ENCODE measurements at regions of chr11 and their contacts with region 1.

Region 1: GRCh38 chr11:1202776-1203504 is 19.9 kb upstream of the MUC5B start:
- DNase-seq: peak; percentile 53 to 83 (median 67)
- H3K4me3 ChIP-seq: no peak overlapping the region
- H3K27ac ChIP-seq: no peak overlapping the region
- H3K4me1 ChIP-seq: no peaks in the 10 kb centered on the region
- H3K27me3 ChIP-seq: peaks cover 4% of the 10 kb centered on the region
- CTCF ChIP-seq: peak; percentile 93

Region 2: GRCh38 chr11:789943-790342 is 413.0 kb before region 1 on chr11 and contains the start of gene CEND1:
- intact Hi-C with region 1: no loop called
- DNase-seq: peak in 2 of 5 donors; percentile 42 to 73
- H3K4me3 ChIP-seq: no peak within 1 kb of the TSS
- H3K27ac ChIP-seq: no peak within 1 kb of the TSS
- H3K4me1 ChIP-seq: peaks cover 0 to 5% (median 0%) of the 10 kb centered on the region in 3 donors
- H3K27me3 ChIP-seq: no peaks in the 10 kb centered on the region
- CTCF ChIP-seq: no peak
- total RNA-seq, gene CEND1: 0.16 TPM

Region 3: DNA sequence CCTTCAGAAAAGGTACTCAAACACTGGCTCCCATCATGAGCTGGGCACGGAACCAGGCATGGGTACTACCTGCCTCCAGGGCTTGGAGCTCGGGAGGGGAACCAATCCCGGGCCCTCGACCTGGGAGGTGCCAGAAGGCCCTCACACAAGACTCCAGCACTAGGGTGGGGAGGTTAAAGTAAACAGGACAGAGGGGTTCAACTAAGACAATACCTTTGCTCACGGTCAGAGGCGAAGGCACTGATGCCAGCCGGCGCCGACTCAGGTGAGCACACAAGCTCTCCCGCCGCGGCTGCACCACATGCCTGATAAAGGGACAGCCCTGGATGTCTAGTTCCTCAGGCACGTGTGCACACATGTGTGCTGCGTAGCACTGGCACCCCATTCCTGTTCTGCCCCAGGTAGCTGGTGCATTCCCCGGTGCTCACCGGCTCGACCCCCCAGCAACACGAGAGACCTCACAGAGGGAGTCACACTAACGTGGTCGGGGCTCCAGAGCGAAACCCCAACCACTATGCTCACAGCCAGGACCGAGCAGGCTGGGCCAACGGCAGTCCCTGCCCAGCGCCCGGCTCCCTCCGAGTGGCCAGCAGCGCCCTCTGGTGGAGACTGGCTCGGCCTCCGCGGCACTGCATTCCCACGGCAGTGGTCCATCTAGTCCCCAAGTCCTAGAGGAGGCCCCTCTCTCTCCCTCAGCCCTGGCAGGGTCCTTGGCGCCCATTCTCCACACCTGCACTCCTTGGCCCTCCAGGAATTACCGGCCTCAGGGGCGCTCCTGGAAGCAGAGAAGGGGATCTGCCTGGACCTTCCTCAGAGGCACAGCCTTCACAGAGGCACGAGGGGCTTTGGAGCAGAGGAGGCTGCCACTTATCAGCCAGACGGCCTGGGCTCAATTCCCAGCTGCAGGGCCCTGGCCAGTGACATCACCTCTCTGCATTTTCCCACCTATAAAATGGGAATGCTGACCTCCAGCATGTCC is 312.4 kb after region 1 on chr11:
- intact Hi-C with region 1: loop called (anchors 5 kb)
- DNase-seq: peak; percentile 75 to 91 (median 85)
- H3K4me3 ChIP-seq: no peak overlapping the region
- H3K27ac ChIP-seq: no peak overlapping the region
- H3K4me1 ChIP-seq: peaks cover 0 to 22% (median 0%) of the 10 kb centered on the region in 3 donors
- H3K27me3 ChIP-seq: no peaks in the 10 kb centered on the region
- CTCF ChIP-seq: peak; percentile 88